GM12878 (cell line): ENCODE measurements at regions of chr9 and their contacts with region 1.

Region 1: DNA sequence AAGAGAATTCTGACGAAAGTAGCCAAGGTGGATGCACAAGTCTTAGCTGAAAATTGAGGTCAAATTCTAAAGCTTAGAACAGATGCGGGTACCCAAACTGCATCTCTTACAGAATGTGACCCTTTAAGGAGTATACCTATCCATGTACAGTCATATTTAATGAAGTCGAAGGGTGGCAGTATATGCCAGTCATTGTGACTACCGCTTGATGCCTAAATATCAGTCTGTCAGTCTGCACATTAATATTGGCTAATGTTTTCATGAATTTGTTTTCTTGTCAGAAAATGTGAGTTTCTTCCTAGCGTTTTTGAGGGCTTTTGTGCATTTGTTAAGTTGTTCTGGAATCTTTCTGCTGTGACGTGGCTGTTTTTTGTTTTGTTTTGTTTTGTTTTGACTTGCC is 264.5 kb upstream of the ELAVL2 start:
- DNase-seq: no peak
- ATAC-seq: peak; percentile 60; the same call in 2 of the 3 replicates
- H3K4me3 ChIP-seq: no peak overlapping the region
- H3K27ac ChIP-seq: no peak overlapping the region
- H3K4me1 ChIP-seq: no peaks in the 10 kb centered on the region
- H3K27me3 ChIP-seq: no peaks in the 10 kb centered on the region
- CTCF ChIP-seq: peak in 1 of 3 experiments; percentile 21; a peak in 1 of 6 replicates
- EP300 ChIP-seq: no peak
- POLR2A ChIP-seq: no peak
- RAD21 ChIP-seq: 0 out of 2 replicates have a peak, but pooled peaks have one; percentile 14

Region 2: GRCh38 chr9:24245988-24246387 is 155.4 kb after region 1 on chr9:
- CTCF ChIA-PET with region 1: no interaction called
- POLR2A ChIA-PET with region 1: no interaction called
- RAD21 ChIA-PET with region 1: no interaction called
- SMC1A ChIA-PET with region 1: interaction called, 3 read pairs
- in situ Hi-C with region 1: no loop called
- intact Hi-C with region 1: loop called (anchors 5 kb)
- DNase-seq: no peak
- ATAC-seq: peak; percentile 56; the same call in 2 of the 3 replicates
- H3K4me3 ChIP-seq: no peak overlapping the region
- H3K27ac ChIP-seq: no peak overlapping the region
- H3K4me1 ChIP-seq: no peaks in the 10 kb centered on the region
- H3K27me3 ChIP-seq: no peaks in the 10 kb centered on the region
- CTCF ChIP-seq: peak; percentile 31 to 44 (median 32); a peak in 3 of 6 replicates
- EP300 ChIP-seq: no peak
- POLR2A ChIP-seq: no peak
- RAD21 ChIP-seq: peak; percentile 24; the same call in 1 of the 2 replicates

Region 3: GRCh38 chr9:24832308-24832707 is 741.7 kb after region 1 on chr9:
- CTCF ChIA-PET with region 1: no interaction called
- POLR2A ChIA-PET with region 1: no interaction called
- RAD21 ChIA-PET with region 1: no interaction called
- SMC1A ChIA-PET with region 1: no interaction called
- in situ Hi-C with region 1: no loop called
- intact Hi-C with region 1: loop called (anchors 2 kb)
- DNase-seq: no peak
- ATAC-seq: no peak
- H3K4me3 ChIP-seq: no peak overlapping the region
- H3K27ac ChIP-seq: no peak overlapping the region
- H3K4me1 ChIP-seq: no peaks in the 10 kb centered on the region
- H3K27me3 ChIP-seq: no peaks in the 10 kb centered on the region
- CTCF ChIP-seq: peak in 1 of 3 experiments; percentile 24; a peak in 1 of 6 replicates
- EP300 ChIP-seq: no peak
- POLR2A ChIP-seq: no peak
- RAD21 ChIP-seq: no peak